ENCODE measurements at regions of chr3 and their contacts with region 1.

Region 1: DNA sequence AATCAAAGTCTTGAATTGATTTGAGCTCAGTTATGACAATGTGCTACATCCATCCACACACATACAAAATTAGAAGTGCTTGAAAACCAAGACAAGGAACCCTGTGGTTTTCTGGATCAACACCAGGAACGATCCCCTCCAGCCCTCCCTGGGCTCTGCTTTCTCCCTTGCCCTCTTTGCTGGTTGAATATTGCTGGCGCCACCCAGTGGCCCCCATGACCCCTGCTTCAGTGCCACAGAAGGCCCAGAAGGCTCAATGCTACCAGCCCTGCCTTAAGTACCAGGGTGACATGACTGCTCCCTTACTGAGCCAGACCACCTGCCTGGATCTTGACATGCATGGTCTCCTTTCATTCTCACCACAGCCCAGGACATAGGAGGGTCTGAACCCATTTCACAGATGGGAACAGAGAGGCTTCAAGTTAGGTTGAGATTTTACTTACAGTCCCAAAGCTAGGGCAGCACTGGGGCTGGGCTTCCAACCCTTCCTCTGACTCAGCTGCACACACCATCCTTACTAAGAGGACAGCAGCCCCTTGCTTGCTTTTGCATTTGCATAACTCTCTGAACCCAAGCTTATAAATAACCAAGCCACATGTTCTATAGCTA is 15.0 kb downstream of the IL12A start:
- DNase-seq: peak in 1 of 2 experiments; percentile 77
- H3K4me3 ChIP-seq: no peak overlapping the region
- H3K4me1 ChIP-seq: no peaks in the 10 kb centered on the region
- H3K27me3 ChIP-seq: no peaks in the 10 kb centered on the region

Region 2: DNA sequence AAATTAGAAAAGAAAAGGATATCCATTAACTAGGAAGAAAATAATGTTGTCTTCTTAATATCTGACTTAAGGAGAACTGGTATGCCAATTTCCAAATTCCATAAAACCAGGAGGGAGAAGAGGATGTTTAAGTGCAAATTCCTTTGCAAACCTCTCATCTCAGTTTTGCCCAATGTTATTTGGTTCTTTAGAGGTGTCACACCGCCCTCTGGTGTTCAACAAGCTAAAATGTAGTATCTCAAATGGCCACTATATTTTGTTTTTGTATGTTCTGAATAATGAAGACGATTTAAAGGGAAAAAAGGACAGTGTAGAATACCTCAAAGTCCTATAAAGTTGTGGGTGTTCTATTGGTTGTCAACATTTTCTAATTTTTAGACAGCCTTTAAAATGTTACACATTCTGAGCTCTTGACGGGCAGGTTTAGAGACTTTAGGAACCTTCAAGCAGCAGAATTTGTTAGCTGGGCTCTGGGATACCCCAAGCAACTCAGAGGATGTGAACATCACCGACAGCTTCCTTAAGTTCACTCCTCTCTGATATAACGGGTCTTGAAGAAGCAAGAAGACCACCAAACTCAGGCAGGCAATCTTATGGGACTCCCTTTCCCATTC is 743.5 kb before region 1 on chr3:
- in situ Hi-C with region 1: loop called (anchors 25 kb)
- DNase-seq: peak; percentile 51 to 67
- H3K4me3 ChIP-seq: no peak overlapping the region
- H3K4me1 ChIP-seq: no peaks in the 10 kb centered on the region
- H3K27me3 ChIP-seq: no peaks in the 10 kb centered on the region

Region 3: GRCh38 chr3:159884661-159885402 is 118.8 kb before region 1 on chr3:
- in situ Hi-C with region 1: loop called (anchors 5 kb)
- DNase-seq: peak in 1 of 2 experiments; percentile 57
- H3K4me3 ChIP-seq: no peak overlapping the region
- H3K4me1 ChIP-seq: no peaks in the 10 kb centered on the region
- H3K27me3 ChIP-seq: no peaks in the 10 kb centered on the region

Measured in HAP-1 (cell line).